ENCODE measurements at regions of chr1 and their contacts with region 1.

Region 1: GRCh38 chr1:181038399-181038873 is 4.7 kb downstream of the MR1 start:
- DNase-seq: peak; percentile 73 to 84
- H3K4me3 ChIP-seq: no peak overlapping the region
- H3K4me1 ChIP-seq: peaks cover 13% of the 10 kb centered on the region
- H3K27me3 ChIP-seq: no peaks in the 10 kb centered on the region

Region 2: DNA sequence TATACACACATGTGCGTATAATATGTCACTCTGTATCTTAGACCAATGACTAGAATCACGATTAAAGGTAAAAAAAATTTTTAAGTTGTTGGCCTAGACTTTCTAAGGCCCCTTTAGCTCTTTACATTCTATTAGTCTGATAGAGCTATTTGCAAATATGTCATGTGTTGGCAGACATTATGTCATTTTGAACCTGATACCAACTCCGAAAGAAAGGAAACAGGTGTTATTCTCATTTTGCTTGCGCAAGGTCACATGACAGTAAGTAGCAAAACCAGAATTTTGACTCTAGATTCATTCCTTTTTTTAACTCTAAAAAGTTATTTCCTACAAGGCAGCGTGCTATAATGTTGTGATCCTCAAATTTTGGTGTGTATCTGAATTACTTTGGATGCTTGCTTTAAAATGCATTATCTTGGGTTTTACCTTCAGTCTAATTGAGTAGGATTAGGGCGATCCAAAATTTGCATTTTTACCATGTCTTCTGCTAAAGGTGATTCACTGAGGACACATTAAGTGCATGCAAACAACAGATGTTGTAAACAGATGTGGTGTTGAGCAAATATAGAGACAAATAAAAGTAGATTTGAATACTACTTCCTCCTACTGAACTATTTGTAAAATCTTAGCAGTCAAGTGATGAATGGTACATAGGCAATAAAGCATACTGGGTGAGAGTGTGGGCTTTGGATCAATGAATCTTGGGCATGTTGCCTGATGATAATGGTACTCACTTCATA is 189.2 kb before region 1 on chr1:
- in situ Hi-C with region 1: no loop called
- DNase-seq: no peak
- H3K4me3 ChIP-seq: no peak overlapping the region
- H3K4me1 ChIP-seq: peaks cover 21% of the 10 kb centered on the region
- H3K27me3 ChIP-seq: no peaks in the 10 kb centered on the region

Region 3: DNA sequence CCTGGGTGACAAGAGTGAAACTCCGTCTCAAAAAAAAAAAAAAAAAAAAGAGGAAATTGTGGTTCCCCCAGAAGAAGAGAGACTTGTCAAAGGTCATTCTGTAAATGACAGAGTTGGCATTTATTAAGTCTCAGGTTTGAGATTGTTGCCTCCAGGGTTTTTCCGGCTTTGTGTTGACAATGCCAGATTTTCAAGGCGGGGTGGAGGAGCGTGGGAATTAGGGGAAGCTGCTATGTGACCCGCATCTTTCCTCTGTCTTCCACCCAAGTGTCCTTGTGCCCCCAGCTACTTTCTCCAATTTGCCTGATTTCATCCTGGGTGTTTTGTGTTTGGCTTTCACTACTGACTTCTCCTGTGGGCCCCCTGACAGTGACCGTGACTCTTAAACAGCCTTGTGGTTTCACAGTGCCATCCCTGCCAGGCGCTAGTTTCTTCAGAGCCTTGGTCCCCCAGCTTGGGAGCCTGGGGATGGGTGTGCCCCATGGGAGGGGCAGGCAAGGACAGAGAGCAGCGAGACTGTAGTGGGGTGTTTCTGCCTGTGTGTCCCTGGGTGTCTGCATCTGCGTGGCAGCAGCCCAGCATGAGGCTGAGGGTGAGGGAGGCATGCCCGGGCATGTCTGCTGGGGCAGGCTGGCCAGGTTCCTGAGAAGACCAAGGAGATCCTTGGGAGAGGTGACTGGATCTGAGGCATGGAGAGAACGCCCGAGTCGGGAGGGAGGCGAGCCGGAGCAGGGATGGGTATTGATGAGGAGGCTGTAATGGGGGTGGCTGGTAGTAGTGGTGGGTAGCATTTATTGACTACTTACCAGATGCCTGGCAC is 96.3 kb after region 1 on chr1:
- in situ Hi-C with region 1: loop called (anchors 5 kb)
- DNase-seq: peak; percentile 23 to 67
- H3K4me3 ChIP-seq: no peak overlapping the region
- H3K4me1 ChIP-seq: peaks cover 9% of the 10 kb centered on the region
- H3K27me3 ChIP-seq: no peaks in the 10 kb centered on the region

Measured in HAP-1 (cell line).